Activated CD8-positive, alpha-beta T cell treated with anti-CD3 and anti-CD28 coated beads for 36 hours (primary cell): ENCODE measurements at regions of chr3 and their contacts with region 1.

Region 1: GRCh38 chr3:50245831-50246516 is 10.0 kb downstream of the GNAI2 start:
- DNase-seq: peak; percentile 99
- ATAC-seq: peak; percentile 73
- H3K4me3 Mint-ChIP-seq: peak overlapping the region; percentile 70
- H3K27ac Mint-ChIP-seq: peak overlapping the region; percentile 95
- H3K4me1 Mint-ChIP-seq: peaks cover 74% of the 10 kb centered on the region
- H3K27me3 Mint-ChIP-seq: no peaks in the 10 kb centered on the region
- CTCF ChIP-seq: peak; percentile 98

Region 2: DNA sequence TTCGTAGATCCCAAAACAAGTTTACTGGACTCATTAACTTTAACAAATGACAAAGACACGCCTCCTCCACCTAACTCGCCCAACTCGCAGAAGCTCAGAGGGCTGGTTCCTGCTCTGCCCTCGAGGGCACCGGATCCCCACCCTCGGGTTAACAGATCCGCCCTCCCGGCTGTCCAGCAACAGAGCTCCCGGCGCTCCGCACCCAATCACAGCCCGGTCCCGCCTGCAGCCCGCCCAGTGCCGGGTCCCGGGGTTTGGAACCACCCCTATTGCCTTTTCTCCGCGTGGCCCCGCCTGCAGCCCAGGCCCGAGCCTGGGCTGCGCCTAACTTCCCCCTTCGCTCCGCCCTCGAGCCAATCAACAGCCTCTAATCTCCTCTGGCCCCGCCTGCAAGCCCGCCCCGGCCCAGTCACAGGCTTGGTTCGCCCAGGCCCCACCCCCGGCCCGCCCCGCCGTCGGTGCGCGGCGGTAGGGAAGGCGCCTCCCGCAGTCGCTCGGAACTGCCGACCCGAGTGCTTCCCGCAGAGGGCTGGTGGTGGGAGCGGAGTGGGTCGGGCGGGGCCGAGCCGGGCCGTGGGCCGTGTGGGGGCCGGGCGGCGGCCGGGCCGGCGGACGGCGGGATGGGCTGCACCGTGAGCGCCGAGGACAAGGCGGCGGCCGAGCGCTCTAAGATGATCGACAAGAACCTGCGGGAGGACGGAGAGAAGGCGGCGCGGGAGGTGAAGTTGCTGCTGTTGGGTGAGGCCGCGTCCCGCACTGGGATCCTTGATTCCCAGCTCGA is 10.1 kb before region 1 on chr3 and contains the start of gene GNAI2:
- CTCF ChIA-PET with region 1: interaction called, 239 read pairs
- POLR2A ChIA-PET with region 1: interaction called, 29 read pairs
- intact Hi-C with region 1: no loop called
- DNase-seq: peak; percentile 99
- ATAC-seq: peak; percentile 91
- H3K4me3 Mint-ChIP-seq: peak within 1 kb of the TSS; percentile 91
- H3K27ac Mint-ChIP-seq: peak within 1 kb of the TSS; percentile 95
- H3K4me1 Mint-ChIP-seq: peaks cover 31% of the 10 kb centered on the region
- H3K27me3 Mint-ChIP-seq: no peaks in the 10 kb centered on the region
- CTCF ChIP-seq: no peak
- total RNA-seq, gene GNAI2: 238 to 242 TPM

Region 3: GRCh38 chr3:50260027-50260941 is 14.3 kb after region 1 on chr3:
- CTCF ChIA-PET with region 1: interaction called, 94 read pairs
- POLR2A ChIA-PET with region 1: interaction called, 21 read pairs
- intact Hi-C with region 1: no loop called
- DNase-seq: peak; percentile 91
- ATAC-seq: peak; percentile 90
- H3K4me3 Mint-ChIP-seq: peak overlapping the region; percentile 61
- H3K27ac Mint-ChIP-seq: peak overlapping the region; percentile 78
- H3K4me1 Mint-ChIP-seq: peaks cover 4% of the 10 kb centered on the region
- H3K27me3 Mint-ChIP-seq: no peaks in the 10 kb centered on the region
- CTCF ChIP-seq: peak; percentile 99

Region 4: DNA sequence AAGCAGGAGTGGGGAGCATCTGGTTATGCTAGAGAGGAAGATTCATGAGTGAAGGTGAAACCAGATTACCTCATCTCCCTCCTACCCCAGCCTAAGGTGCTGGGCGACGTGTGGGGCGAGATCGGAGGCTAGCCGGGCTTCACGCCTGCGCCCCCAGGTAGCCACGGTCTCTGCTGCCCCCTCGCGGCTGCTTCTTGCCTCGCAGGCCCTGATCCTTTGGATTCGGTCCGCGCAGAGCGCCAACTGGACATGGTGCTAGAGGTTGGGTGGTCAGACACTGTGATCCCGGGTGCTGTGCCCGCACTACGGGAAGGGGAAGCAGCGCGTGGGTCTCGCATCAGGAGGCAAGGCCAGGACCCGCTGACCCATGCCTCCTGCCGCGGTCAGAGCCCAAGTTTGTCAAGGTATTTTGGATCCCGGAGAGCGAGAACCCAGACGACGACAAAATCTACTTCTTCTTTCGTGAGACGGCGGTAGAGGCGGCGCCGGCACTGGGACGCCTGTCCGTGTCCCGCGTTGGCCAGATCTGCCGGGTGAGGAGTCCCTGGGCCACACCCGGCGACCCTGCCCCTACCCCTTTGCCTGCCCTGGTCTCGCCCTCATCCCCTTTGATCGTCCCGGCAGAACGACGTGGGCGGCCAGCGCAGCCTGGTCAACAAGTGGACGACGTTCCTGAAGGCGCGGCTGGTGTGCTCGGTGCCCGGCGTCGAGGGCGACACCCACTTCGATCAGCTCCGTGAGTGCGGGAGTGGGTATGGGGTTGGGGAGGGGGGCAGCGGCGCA is 27.1 kb after region 1 on chr3:
- CTCF ChIA-PET with region 1: interaction called, 12 read pairs
- POLR2A ChIA-PET with region 1: interaction called, 10 read pairs
- intact Hi-C with region 1: no loop called
- DNase-seq: peak; percentile 94
- ATAC-seq: peak; percentile 88
- H3K4me3 Mint-ChIP-seq: peak overlapping the region; percentile 74
- H3K27ac Mint-ChIP-seq: peak overlapping the region; percentile 26
- H3K4me1 Mint-ChIP-seq: peaks cover 33% of the 10 kb centered on the region
- H3K27me3 Mint-ChIP-seq: peaks cover 39% of the 10 kb centered on the region
- CTCF ChIP-seq: peak; percentile 96

Region 5: GRCh38 chr3:50350527-50351322 is 104.8 kb after region 1 on chr3 and contains the starts of genes CYB561D2 and NPRL2:
- CTCF ChIA-PET with region 1: interaction called, 10 read pairs
- POLR2A ChIA-PET with region 1: no interaction called
- intact Hi-C with region 1: no loop called
- DNase-seq: peak; percentile 98
- ATAC-seq: peak; percentile 89
- H3K4me3 Mint-ChIP-seq: peak within 1 kb of the TSS; percentile 91
- H3K27ac Mint-ChIP-seq: peak within 1 kb of the TSS; percentile 96
- H3K4me1 Mint-ChIP-seq: peaks cover 56% of the 10 kb centered on the region
- H3K27me3 Mint-ChIP-seq: no peaks in the 10 kb centered on the region
- CTCF ChIP-seq: no peak
- total RNA-seq, gene CYB561D2: 17.1 to 18.2 TPM
- total RNA-seq, gene NPRL2: 41.3 to 44.7 TPM